AG04450 (cell line): ENCODE measurements at regions of chr4 and their contacts with region 1.

Region 1: DNA sequence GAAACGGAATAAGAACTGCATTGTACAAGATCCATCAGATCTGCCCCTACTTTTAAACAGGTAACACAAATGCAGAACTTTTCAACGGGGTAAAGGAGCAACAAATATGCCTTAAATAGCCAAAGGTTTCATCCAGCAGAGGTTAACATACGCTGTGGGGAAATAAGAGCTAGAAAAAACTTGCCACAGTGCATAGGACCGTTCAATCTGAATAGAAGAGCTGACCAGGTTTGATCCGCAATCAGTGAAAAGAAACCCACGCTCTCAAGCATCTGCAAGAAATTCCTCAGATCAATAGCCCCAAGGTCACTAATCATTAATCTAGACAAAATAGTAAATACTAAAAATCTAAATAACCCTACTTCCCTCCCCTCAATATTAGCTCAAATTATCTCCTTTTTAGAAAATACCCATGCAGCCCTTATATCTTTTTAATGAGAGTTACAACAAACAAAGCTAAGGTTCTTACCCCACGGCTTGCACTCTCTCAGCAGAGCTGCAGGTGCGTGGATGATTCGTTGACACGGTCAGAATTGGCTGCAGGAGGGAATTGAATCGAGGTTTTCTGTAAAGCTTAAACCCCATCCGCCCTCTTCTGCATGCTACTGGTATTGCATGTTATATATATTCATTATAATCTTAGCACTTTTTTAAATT is at the start of gene TLR10:
- DNase-seq: peak; percentile 16
- H3K4me3 ChIP-seq: no peak within 1 kb of the TSS
- H3K27ac ChIP-seq: no peak within 1 kb of the TSS
- H3K27me3 ChIP-seq: peaks cover 4% of the 10 kb centered on the region
- CTCF ChIP-seq: peak; percentile 64
- polyA plus RNA-seq, gene TLR10: not detected in 2 replicates

Region 2: DNA sequence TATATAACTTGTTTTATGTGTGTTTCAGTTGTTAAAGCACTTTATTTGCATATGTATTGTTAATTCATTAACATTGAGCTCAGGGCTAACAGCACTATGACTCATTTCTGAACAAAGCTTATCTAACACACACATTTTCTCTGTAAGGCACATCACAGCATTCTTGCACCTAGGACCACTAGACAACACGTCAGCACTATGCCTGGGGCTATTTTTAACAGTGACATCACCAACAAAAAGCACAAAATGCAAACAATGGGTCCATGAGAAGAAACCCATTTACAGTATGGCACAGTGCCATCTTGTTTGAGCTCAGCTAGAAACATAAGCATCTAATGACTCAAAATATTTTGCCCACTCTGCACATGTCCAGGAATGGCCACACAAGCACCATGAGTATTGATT is 1220.8 kb before region 1 on chr4:
- CTCF ChIA-PET with region 1: no interaction called
- POLR2A ChIA-PET with region 1: no interaction called
- DNase-seq: peak; percentile 23
- H3K4me3 ChIP-seq: no peak overlapping the region
- H3K27ac ChIP-seq: no peak overlapping the region
- H3K27me3 ChIP-seq: no peaks in the 10 kb centered on the region
- CTCF ChIP-seq: no peak

Region 3: GRCh38 chr4:38768968-38769394 is 13.6 kb before region 1 on chr4:
- CTCF ChIA-PET with region 1: interaction called, 34 read pairs
- POLR2A ChIA-PET with region 1: no interaction called
- DNase-seq: no peak
- H3K4me3 ChIP-seq: no peak overlapping the region
- H3K27ac ChIP-seq: no peak overlapping the region
- H3K27me3 ChIP-seq: peaks cover 4% of the 10 kb centered on the region
- CTCF ChIP-seq: no peak

Region 4: DNA sequence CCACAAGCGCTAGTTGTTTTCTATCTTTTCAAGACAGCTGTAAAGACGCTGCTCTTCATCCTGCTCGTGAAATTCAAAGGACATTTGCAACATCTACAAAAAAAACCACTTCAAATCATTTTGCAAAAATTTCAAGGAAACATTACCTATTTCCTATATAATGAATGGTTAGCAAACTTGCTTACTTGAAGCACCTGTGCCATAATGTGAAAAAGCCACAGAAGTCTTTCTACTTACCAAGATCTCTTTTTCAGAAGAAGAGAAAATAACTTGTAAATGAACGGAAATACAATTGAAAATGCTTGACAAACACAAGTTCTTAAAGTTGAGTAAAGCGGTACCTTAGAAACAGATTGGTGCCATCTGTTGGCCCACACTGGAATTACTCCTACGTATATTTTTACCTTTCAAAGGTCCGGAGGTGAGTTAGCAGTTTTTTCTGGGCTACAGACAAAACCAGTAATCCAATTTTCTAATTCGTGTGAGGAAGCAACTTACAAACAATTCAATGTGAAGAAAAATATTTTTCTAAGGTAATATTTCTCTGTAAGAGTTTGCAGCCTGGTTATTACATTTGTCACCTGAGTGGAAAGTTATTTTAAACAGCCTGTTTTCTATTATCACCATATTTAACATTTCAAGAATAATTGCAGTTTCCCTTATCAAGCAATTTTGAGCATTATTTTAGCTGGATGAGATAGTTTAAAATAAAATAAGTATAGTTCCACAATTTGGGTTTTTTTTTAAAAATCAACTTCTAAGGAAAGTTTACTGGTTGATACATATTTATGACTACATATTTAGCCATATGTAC is 74.2 kb after region 1 on chr4 and contains the start of gene TLR6:
- CTCF ChIA-PET with region 1: interaction called, 11 read pairs
- POLR2A ChIA-PET with region 1: no interaction called
- DNase-seq: no peak
- H3K4me3 ChIP-seq: peak within 1 kb of the TSS; percentile 20
- H3K27ac ChIP-seq: peak within 1 kb of the TSS; percentile 94
- H3K27me3 ChIP-seq: no peaks in the 10 kb centered on the region
- CTCF ChIP-seq: peak; percentile 69
- polyA plus RNA-seq, gene TLR6: 2.8 and 3.7 TPM in 2 replicates

Region 5: DNA sequence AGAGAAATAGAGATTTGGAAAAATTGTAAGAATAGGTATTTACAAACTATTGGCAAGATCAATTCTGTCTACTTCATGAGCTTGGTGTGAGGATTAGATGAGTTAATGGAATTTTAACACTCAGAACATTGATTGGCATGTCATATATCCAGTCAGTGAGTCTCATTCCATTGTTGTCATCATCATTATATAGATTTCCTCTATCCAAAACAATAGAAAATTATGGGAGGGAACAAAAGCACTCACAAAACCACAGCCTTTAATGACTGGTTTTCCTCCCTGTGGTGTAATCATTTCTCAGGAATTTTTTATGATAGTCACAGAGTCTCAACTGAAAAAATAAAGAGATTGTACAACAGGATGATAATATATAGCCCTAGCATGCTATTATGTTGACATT is 300.6 kb after region 1 on chr4:
- CTCF ChIA-PET with region 1: no interaction called
- POLR2A ChIA-PET with region 1: no interaction called
- DNase-seq: no peak
- H3K4me3 ChIP-seq: no peak overlapping the region
- H3K27ac ChIP-seq: no peak overlapping the region
- H3K27me3 ChIP-seq: no peaks in the 10 kb centered on the region
- CTCF ChIP-seq: no peak